ENCODE measurements at regions of chr10 and their contacts with region 1.

Region 1: GRCh38 chr10:72802763-72803505 is 90.6 kb upstream of the OIT3 start:
- DNase-seq: peak; percentile 74
- H3K4me3 ChIP-seq: peak overlapping the region in 1 of 3 experiments; percentile 38
- H3K27ac ChIP-seq: peak overlapping the region; percentile 48
- H3K4me1 ChIP-seq: peaks cover 34% of the 10 kb centered on the region
- H3K27me3 ChIP-seq: no peaks in the 10 kb centered on the region
- CTCF ChIP-seq: no peak
- POLR2A ChIP-seq: no peak

Region 2: GRCh38 chr10:72472306-72472705 is 330.6 kb before region 1 on chr10:
- CTCF ChIA-PET with region 1: no interaction called
- POLR2A ChIA-PET with region 1: interaction called, 12 read pairs
- dilution Hi-C with region 1: no loop called
- intact Hi-C with region 1: no loop called
- DNase-seq: no peak
- H3K4me3 ChIP-seq: no peak overlapping the region
- H3K27ac ChIP-seq: no peak overlapping the region
- H3K4me1 ChIP-seq: no peaks in the 10 kb centered on the region
- H3K27me3 ChIP-seq: no peaks in the 10 kb centered on the region
- CTCF ChIP-seq: no peak
- POLR2A ChIP-seq: no peak

Region 3: GRCh38 chr10:72740528-72740927 is 62.4 kb before region 1 on chr10:
- CTCF ChIA-PET with region 1: no interaction called
- POLR2A ChIA-PET with region 1: no interaction called
- dilution Hi-C with region 1: no loop called
- intact Hi-C with region 1: no loop called
- DNase-seq: peak; percentile 91
- H3K4me3 ChIP-seq: no peak overlapping the region
- H3K27ac ChIP-seq: peak overlapping the region; percentile 23
- H3K4me1 ChIP-seq: peaks cover 18% of the 10 kb centered on the region
- H3K27me3 ChIP-seq: no peaks in the 10 kb centered on the region
- CTCF ChIP-seq: no peak
- POLR2A ChIP-seq: no peak

Region 4: GRCh38 chr10:72821606-72822005 is 18.7 kb after region 1 on chr10:
- CTCF ChIA-PET with region 1: no interaction called
- POLR2A ChIA-PET with region 1: no interaction called
- dilution Hi-C with region 1: no loop called
- intact Hi-C with region 1: no loop called
- DNase-seq: no peak
- H3K4me3 ChIP-seq: no peak overlapping the region
- H3K27ac ChIP-seq: no peak overlapping the region
- H3K4me1 ChIP-seq: no peaks in the 10 kb centered on the region
- H3K27me3 ChIP-seq: no peaks in the 10 kb centered on the region
- CTCF ChIP-seq: no peak
- POLR2A ChIP-seq: no peak

Measured in endothelial cell of umbilical vein (primary cell).